Activated naive CD4-positive, alpha-beta T cell treated with anti-CD3 and anti-CD28 coated beads for 36 hours (primary cell): ENCODE measurements at regions of chr6 and their contacts with region 1.

Region 1: DNA sequence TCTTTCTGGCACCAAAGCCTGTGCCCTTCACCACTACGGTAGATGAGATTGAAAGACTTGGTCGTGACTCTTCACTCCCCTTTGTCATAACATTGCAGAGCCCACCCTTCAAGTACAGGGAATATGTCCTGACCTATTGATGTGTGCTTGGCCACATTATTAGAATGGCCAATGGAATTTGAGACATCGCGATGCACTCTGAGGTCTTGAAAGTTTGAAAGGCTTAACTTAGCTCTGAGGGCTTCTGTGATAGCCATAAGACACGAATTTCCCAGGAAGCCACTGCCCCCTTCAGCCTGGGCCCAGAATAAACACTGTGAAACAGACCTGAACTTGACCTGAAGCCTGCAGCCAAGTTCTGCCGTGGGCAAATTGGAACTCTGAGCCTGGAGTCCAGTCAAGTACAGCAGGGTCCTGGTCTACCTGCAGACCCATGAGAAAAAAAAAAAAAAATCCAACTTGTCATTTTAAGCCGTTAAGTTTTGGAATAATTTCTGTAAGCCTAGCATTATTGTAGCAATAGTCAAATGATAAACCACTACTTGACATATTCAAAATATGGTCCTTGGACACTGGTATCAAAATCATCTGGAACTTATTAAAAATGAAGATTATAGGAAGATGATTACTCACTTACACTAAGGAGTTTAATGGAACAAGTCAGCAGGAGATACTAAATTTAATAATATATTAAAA is 36.9 kb upstream of the TRAF3IP2 start:
- DNase-seq: peak; percentile 73
- H3K4me3 Mint-ChIP-seq: no peak overlapping the region
- H3K27ac Mint-ChIP-seq: no peak overlapping the region
- H3K4me1 Mint-ChIP-seq: no peaks in the 10 kb centered on the region
- H3K27me3 Mint-ChIP-seq: no peaks in the 10 kb centered on the region

Region 2: GRCh38 chr6:110971468-110971867 is 671.1 kb before region 1 on chr6:
- CTCF ChIA-PET with region 1: no interaction called
- intact Hi-C with region 1: no loop called
- DNase-seq: no peak
- H3K4me3 Mint-ChIP-seq: no peak overlapping the region
- H3K27ac Mint-ChIP-seq: no peak overlapping the region
- H3K4me1 Mint-ChIP-seq: no peaks in the 10 kb centered on the region
- H3K27me3 Mint-ChIP-seq: no peaks in the 10 kb centered on the region

Region 3: DNA sequence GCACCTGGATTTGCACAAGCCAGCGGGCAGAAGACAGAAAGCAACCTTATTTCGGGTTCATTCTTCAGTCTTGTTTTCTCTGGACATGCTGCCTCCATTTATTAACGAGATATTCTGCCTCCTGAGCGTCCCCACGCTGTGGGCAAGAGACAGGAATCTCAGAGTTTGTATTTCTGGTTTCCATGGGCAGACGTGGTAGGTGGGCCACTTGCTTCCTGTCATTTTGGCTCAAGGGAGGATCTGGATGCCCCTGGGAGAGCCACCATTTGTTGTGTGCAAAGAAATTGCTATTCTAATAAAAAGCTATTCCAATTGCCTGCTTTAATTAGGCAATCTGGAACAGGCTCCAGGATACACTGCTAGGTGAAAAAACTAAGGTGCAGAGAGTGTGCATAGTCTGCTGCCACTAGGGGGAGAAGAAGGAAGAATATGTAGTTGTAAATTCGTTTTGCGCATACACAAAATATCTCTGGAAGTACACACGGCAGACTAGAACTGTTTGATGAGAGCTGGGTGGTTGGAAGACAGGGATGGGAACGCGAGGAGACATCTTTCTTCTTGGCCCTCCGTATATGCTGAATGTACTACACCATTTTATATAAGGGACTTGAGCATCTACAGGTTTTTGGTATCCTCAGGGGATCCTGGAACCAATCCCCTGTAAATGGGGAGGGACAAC is 585.4 kb before region 1 on chr6:
- CTCF ChIA-PET with region 1: no interaction called
- intact Hi-C with region 1: loop called (anchors 10 kb)
- DNase-seq: no peak
- H3K4me3 Mint-ChIP-seq: no peak overlapping the region
- H3K27ac Mint-ChIP-seq: no peak overlapping the region
- H3K4me1 Mint-ChIP-seq: no peaks in the 10 kb centered on the region
- H3K27me3 Mint-ChIP-seq: no peaks in the 10 kb centered on the region

Region 4: DNA sequence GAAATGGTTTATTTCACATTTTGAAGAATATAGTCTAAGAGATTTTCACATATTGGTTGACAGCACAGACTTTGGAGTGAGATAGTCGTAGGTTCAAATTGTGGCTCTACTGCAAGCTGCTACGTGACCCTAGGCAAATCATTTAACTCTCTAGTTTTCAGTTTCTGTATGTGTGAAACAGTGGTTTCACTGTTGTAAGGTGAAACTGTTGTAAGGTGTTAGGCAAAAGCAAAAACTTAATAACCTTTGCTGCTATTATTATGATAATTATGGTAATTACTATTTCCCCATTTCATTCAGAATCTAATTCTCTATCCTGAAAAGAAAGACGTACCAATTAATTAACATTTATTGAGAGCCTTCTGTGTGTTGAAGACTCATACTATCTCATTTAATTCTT is 303.8 kb before region 1 on chr6:
- CTCF ChIA-PET with region 1: no interaction called
- intact Hi-C with region 1: no loop called
- DNase-seq: no peak
- H3K4me3 Mint-ChIP-seq: no peak overlapping the region
- H3K27ac Mint-ChIP-seq: no peak overlapping the region
- H3K4me1 Mint-ChIP-seq: peaks cover 22% of the 10 kb centered on the region
- H3K27me3 Mint-ChIP-seq: no peaks in the 10 kb centered on the region